B cell (primary cell): ENCODE measurements at regions of chr12 and their contacts with region 1.

Region 1: DNA sequence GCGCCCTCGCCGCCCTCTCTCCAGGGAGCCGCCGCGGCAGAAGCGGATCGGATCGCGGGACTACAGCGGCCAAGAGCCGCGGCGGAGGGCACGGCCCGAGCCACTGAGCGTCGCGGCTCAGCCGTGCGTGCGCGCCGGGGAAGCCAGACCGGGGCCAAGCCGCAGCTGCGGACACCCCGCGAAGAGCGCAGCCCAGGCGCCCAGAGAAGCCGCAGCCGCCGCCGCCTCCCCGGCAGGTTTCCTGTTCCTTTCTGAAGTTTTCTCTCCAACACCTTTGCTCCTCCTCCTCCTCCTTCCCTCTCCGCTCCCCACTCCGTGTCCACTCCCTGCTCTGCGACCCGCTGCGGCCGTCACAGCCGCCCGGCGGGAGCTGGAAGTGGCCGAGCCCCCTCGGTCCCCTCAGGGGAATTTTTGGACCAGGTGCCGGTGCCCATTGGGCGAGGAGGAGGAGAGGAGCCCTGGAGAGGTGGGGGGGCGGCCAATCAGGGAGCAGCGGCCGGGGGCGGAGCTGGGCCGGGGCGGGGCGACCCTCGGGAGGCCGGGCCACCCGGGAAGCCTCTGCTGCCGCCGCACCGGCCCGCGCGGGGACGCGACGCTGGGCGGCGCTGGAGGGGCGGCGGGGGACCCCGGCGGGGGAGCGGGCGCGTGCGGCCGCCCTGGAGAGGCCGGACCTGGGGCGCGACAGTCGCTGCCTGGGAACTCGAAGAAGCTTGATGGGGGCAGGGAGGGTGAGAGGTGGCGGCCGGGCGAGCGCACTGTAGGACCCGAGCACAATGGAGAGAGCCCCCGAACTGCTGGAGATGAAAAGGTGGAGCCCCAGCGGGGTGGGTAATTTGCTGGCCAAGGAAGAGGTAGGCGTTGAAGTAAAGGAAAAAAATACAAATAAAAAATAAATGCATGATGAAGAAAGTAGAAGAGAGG is at the start of gene ITPR2:
- DNase-seq: peak; percentile 95
- ATAC-seq: peak; percentile 88
- H3K4me3 ChIP-seq: peak within 1 kb of the TSS; percentile 67 to 97 (median 95)
- H3K4me3 Mint-ChIP-seq: peak within 1 kb of the TSS; percentile 98
- H3K27ac ChIP-seq: peak within 1 kb of the TSS; percentile 90 to 92
- H3K27ac Mint-ChIP-seq: peak within 1 kb of the TSS; percentile 100
- H3K4me1 ChIP-seq: peaks cover 15 to 21% of the 10 kb centered on the region in 2 donors
- H3K4me1 Mint-ChIP-seq: peaks cover 49% of the 10 kb centered on the region
- H3K27me3 ChIP-seq: no peaks in the 10 kb centered on the region
- H3K27me3 Mint-ChIP-seq: no peaks in the 10 kb centered on the region
- CTCF ChIP-seq: peak; percentile 56
- total RNA-seq, gene ITPR2: 113 and 122 TPM in 2 replicates

Region 2: GRCh38 chr12:25151476-25151875 is 1681.6 kb before region 1 on chr12:
- CTCF ChIA-PET with region 1: interaction called, 3 read pairs
- POLR2A ChIA-PET with region 1: no interaction called
- intact Hi-C with region 1: loop called (anchors 5 kb)
- DNase-seq: no peak
- ATAC-seq: no peak
- H3K4me3 ChIP-seq: no peak overlapping the region
- H3K4me3 Mint-ChIP-seq: no peak overlapping the region
- H3K27ac ChIP-seq: no peak overlapping the region
- H3K27ac Mint-ChIP-seq: no peak overlapping the region
- H3K4me1 ChIP-seq: peaks cover 18 to 21% of the 10 kb centered on the region in 2 donors
- H3K4me1 Mint-ChIP-seq: peaks cover 18% of the 10 kb centered on the region
- H3K27me3 ChIP-seq: no peaks in the 10 kb centered on the region
- H3K27me3 Mint-ChIP-seq: no peaks in the 10 kb centered on the region
- CTCF ChIP-seq: no peak

Region 3: GRCh38 chr12:26153421-26154154 is 679.5 kb before region 1 on chr12:
- CTCF ChIA-PET with region 1: interaction called, 3 read pairs
- POLR2A ChIA-PET with region 1: interaction called, 3 read pairs
- intact Hi-C with region 1: loop called (anchors 2 kb)
- DNase-seq: no peak
- ATAC-seq: no peak
- H3K4me3 ChIP-seq: no peak overlapping the region
- H3K4me3 Mint-ChIP-seq: no peak overlapping the region
- H3K27ac ChIP-seq: peak overlapping the region; percentile 14 to 88
- H3K27ac Mint-ChIP-seq: peak overlapping the region; percentile 99
- H3K4me1 ChIP-seq: peaks cover 60 to 65% of the 10 kb centered on the region in 2 donors
- H3K4me1 Mint-ChIP-seq: peaks cover 82% of the 10 kb centered on the region
- H3K27me3 ChIP-seq: no peaks in the 10 kb centered on the region
- H3K27me3 Mint-ChIP-seq: no peaks in the 10 kb centered on the region
- CTCF ChIP-seq: no peak

Region 4: DNA sequence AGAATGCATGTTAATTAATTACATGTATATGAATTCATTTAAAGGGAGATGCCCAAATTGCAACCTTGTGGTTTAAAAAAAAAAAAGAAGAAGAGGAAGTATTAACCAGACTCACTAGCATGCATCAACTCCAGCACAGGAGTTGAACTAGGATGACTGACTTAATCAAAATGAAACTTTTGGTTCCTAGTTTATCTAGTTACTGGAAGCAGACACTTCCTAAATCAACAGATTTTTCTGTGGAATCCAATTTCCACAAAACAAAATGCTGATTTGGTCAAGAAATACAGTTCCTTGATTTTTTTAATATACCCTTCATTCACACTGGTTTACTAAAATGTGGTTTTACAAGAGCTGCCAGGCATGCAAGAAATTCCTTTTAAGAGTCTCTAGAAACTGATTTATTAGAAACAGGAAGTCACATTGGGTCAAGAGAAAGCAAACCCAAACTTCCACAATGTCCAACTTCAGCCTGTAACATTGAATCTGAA is 41.7 kb before region 1 on chr12:
- CTCF ChIA-PET with region 1: interaction called, 3 read pairs
- POLR2A ChIA-PET with region 1: no interaction called
- intact Hi-C with region 1: loop called (anchors 5 kb)
- DNase-seq: peak; percentile 64
- ATAC-seq: peak; percentile 77
- H3K4me3 ChIP-seq: no peak overlapping the region
- H3K4me3 Mint-ChIP-seq: peak overlapping the region; percentile 55
- H3K27ac ChIP-seq: peak overlapping the region; percentile 8 to 44
- H3K27ac Mint-ChIP-seq: peak overlapping the region; percentile 65
- H3K4me1 ChIP-seq: peaks cover 14 to 20% of the 10 kb centered on the region in 2 donors
- H3K4me1 Mint-ChIP-seq: peaks cover 23% of the 10 kb centered on the region
- H3K27me3 ChIP-seq: no peaks in the 10 kb centered on the region
- H3K27me3 Mint-ChIP-seq: no peaks in the 10 kb centered on the region
- CTCF ChIP-seq: no peak

Region 5: GRCh38 chr12:26853303-26854030 is 20.4 kb after region 1 on chr12:
- CTCF ChIA-PET with region 1: interaction called, 12 read pairs
- POLR2A ChIA-PET with region 1: no interaction called
- intact Hi-C with region 1: no loop called
- DNase-seq: peak; percentile 79
- ATAC-seq: peak; percentile 92
- H3K4me3 ChIP-seq: no peak overlapping the region
- H3K4me3 Mint-ChIP-seq: no peak overlapping the region
- H3K27ac ChIP-seq: no peak overlapping the region
- H3K27ac Mint-ChIP-seq: peak overlapping the region; percentile 13
- H3K4me1 ChIP-seq: peaks cover 3 to 8% of the 10 kb centered on the region in 2 donors
- H3K4me1 Mint-ChIP-seq: no peaks in the 10 kb centered on the region
- H3K27me3 ChIP-seq: no peaks in the 10 kb centered on the region
- H3K27me3 Mint-ChIP-seq: no peaks in the 10 kb centered on the region
- CTCF ChIP-seq: peak; percentile 94

Region 6: DNA sequence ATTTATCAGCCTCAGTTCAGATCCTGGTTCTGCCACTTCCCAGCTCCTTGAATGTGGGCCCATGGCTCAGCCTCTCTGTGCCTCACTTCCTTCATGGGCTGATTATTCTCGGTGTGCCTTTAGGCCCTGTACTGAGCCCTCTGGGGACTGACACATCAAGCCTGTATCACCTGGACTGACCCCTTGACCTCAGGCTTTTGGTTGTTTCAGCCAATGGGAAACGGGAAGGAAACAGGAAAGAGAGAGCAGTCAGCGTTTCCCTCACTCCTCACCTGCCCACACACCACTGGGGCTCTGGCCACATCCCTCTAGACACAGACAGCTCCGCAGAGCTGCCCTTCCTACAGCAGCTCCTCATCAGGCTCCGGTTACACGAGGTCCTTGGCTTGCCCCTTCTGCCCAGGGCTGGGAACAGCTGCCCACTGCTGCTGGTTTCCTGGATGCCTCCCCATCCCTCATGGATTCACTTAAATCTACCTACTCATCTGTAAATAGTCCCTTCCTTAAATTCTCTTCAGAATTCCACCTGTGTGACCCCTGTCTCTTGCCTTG is 36.9 kb after region 1 on chr12:
- CTCF ChIA-PET with region 1: no interaction called
- POLR2A ChIA-PET with region 1: no interaction called
- intact Hi-C with region 1: no loop called
- DNase-seq: no peak
- ATAC-seq: no peak
- H3K4me3 ChIP-seq: no peak overlapping the region
- H3K4me3 Mint-ChIP-seq: no peak overlapping the region
- H3K27ac ChIP-seq: no peak overlapping the region
- H3K27ac Mint-ChIP-seq: no peak overlapping the region
- H3K4me1 ChIP-seq: no peaks in the 10 kb centered on the region
- H3K4me1 Mint-ChIP-seq: peaks cover 11% of the 10 kb centered on the region
- H3K27me3 ChIP-seq: no peaks in the 10 kb centered on the region
- H3K27me3 Mint-ChIP-seq: no peaks in the 10 kb centered on the region
- CTCF ChIP-seq: no peak

Region 7: GRCh38 chr12:26937875-26938700 is 105.0 kb after region 1 on chr12 and contains the starts of genes FGFR1OP2 and INTS13:
- CTCF ChIA-PET with region 1: no interaction called
- POLR2A ChIA-PET with region 1: no interaction called
- intact Hi-C with region 1: loop called (anchors 1 kb)
- DNase-seq: peak; percentile 97
- ATAC-seq: peak; percentile 91
- H3K4me3 ChIP-seq: peak within 1 kb of the TSS; percentile 72 to 100 (median 98)
- H3K4me3 Mint-ChIP-seq: peak within 1 kb of the TSS; percentile 99
- H3K27ac ChIP-seq: peak within 1 kb of the TSS; percentile 88 to 96
- H3K27ac Mint-ChIP-seq: peak within 1 kb of the TSS; percentile 99
- H3K4me1 ChIP-seq: peaks cover 18 to 57% of the 10 kb centered on the region in 2 donors
- H3K4me1 Mint-ChIP-seq: peaks cover 64% of the 10 kb centered on the region
- H3K27me3 ChIP-seq: no peaks in the 10 kb centered on the region
- H3K27me3 Mint-ChIP-seq: no peaks in the 10 kb centered on the region
- CTCF ChIP-seq: no peak
- total RNA-seq, gene FGFR1OP2: 64.3 and 67.3 TPM in 2 replicates
- total RNA-seq, gene INTS13: 15.6 and 16.2 TPM in 2 replicates

Region 8: GRCh38 chr12:27710592-27711316 is 877.7 kb after region 1 on chr12 and contains the start of gene MRPS35:
- CTCF ChIA-PET with region 1: no interaction called
- POLR2A ChIA-PET with region 1: interaction called, 4 read pairs
- intact Hi-C with region 1: loop called (anchors 1 kb)
- DNase-seq: peak; percentile 95
- ATAC-seq: peak; percentile 99
- H3K4me3 ChIP-seq: peak within 1 kb of the TSS; percentile 71 to 96 (median 92)
- H3K4me3 Mint-ChIP-seq: peak within 1 kb of the TSS; percentile 97
- H3K27ac ChIP-seq: peak within 1 kb of the TSS; percentile 68 to 80
- H3K27ac Mint-ChIP-seq: peak within 1 kb of the TSS; percentile 97
- H3K4me1 ChIP-seq: peaks cover 12 to 16% of the 10 kb centered on the region in 2 donors
- H3K4me1 Mint-ChIP-seq: peaks cover 31% of the 10 kb centered on the region
- H3K27me3 ChIP-seq: peaks cover 0 to 4% (median 0%) of the 10 kb centered on the region in 4 experiments
- H3K27me3 Mint-ChIP-seq: peaks cover 7% of the 10 kb centered on the region
- CTCF ChIP-seq: no peak
- total RNA-seq, gene MRPS35: 18.0 and 24.5 TPM in 2 replicates